ENCODE measurements at regions of chr3 and their contacts with region 1.

Region 1: GRCh38 chr3:13452490-13453335 is 27.4 kb upstream of the HDAC11 start:
- DNase-seq: peak; percentile 79
- ATAC-seq: peak; percentile 32
- H3K4me3 ChIP-seq: peak overlapping the region; percentile 62
- H3K27ac ChIP-seq: peak overlapping the region; percentile 58; the same call in 1 of the 2 replicates
- H3K4me1 ChIP-seq: peaks cover 8% of the 10 kb centered on the region; the same call in 1 of the 2 replicates
- H3K27me3 ChIP-seq: no peaks in the 10 kb centered on the region
- CTCF ChIP-seq: peak; percentile 84

Region 2: DNA sequence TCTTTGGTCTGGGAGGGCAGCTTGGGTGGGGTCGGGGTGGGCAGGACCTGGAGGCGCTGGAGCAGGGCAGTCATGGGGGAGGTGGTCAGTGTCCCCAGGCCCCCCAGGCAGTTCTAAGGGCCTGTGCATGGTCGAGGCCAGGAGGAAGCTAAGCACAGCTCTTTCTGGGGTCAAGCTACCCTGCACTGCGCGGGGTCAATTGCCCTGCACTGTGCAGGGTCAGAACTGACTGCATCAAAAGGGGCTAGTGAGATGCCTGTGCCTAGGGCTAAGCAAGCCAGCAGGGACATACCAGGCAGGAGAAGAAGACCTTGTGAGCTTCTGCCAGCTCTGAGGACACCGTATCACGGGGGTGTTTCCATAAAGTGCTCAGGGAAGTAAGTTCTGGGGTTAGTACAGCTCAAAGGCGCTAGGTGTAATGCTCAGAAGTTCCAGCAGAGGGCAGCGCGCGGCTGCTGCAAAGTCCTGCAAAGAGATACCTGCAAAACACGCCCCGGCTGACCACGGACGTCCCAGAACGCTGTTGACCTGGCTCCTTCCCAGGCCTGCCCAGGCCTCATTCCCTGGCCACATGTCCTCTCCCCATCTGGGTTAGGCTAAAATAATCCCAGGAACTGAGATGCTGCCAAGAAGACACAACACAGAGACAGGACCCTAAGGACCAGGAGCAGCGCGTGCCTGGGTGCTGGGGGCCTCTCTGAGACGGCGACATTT is 360.7 kb before region 1 on chr3:
- CTCF ChIA-PET with region 1: interaction called, 23 read pairs
- POLR2A ChIA-PET with region 1: interaction called, 3 read pairs
- intact Hi-C with region 1: loop called (anchors 1 kb)
- DNase-seq: peak; percentile 95
- ATAC-seq: peak; percentile 79
- H3K4me3 ChIP-seq: peak overlapping the region; percentile 22; the same call in 1 of the 2 replicates
- H3K27ac ChIP-seq: peak overlapping the region; percentile 83
- H3K4me1 ChIP-seq: peaks cover 15% of the 10 kb centered on the region
- H3K27me3 ChIP-seq: no peaks in the 10 kb centered on the region
- CTCF ChIP-seq: peak; percentile 94

Region 3: GRCh38 chr3:13282986-13283876 is 169.5 kb before region 1 on chr3:
- CTCF ChIA-PET with region 1: interaction called, 13 read pairs
- POLR2A ChIA-PET with region 1: no interaction called
- intact Hi-C with region 1: loop called (anchors 1 kb)
- DNase-seq: peak; percentile 63
- ATAC-seq: peak; percentile 44
- H3K4me3 ChIP-seq: peak overlapping the region; percentile 84
- H3K27ac ChIP-seq: no peak overlapping the region
- H3K4me1 ChIP-seq: peaks cover 15% of the 10 kb centered on the region
- H3K27me3 ChIP-seq: no peaks in the 10 kb centered on the region
- CTCF ChIP-seq: peak; percentile 63

Region 4: DNA sequence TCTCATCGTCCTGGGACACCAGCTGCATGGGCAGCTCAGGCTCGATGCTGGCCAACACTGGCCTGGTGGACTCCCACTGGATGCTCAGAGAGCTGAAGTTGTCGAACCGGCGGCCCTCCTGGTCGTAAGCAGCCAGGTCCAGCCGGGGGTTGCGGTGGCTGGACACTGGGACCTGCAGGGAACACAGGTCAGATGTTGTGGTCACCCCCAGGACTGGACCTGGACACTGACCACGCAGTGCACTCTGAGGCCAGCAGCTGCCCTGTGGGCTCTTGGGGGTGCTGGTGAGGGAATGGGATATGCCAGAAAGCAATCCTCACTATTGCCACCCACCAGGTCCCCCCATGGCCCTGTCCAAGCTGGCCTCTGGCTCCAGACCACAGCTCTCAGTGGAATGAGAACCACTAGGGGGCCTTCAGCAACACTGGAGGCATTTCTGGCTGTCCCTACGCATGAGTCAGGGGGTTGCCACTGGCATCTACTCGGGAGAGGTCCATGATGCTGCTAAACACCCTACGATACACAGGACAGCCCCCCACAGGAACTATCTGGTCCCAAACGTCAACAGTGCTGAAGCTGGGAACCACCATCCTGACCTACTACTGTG is 98.7 kb before region 1 on chr3:
- CTCF ChIA-PET with region 1: interaction called, 6 read pairs
- POLR2A ChIA-PET with region 1: no interaction called
- intact Hi-C with region 1: loop called (anchors 1 kb)
- DNase-seq: peak; percentile 43
- ATAC-seq: peak; percentile 78
- H3K4me3 ChIP-seq: no peak overlapping the region
- H3K27ac ChIP-seq: no peak overlapping the region
- H3K4me1 ChIP-seq: peaks cover 8% of the 10 kb centered on the region
- H3K27me3 ChIP-seq: no peaks in the 10 kb centered on the region
- CTCF ChIP-seq: peak; percentile 65

Region 5: GRCh38 chr3:13414040-13414729 is 38.5 kb before region 1 on chr3:
- CTCF ChIA-PET with region 1: interaction called, 6 read pairs
- POLR2A ChIA-PET with region 1: interaction called, 3 read pairs
- intact Hi-C with region 1: loop called (anchors 2 kb)
- DNase-seq: peak; percentile 51
- ATAC-seq: peak; percentile 49
- H3K4me3 ChIP-seq: no peak overlapping the region
- H3K27ac ChIP-seq: peak overlapping the region; percentile 78
- H3K4me1 ChIP-seq: peaks cover 43% of the 10 kb centered on the region
- H3K27me3 ChIP-seq: no peaks in the 10 kb centered on the region
- CTCF ChIP-seq: no peak

Measured in PC-3 (cell line).